ENCODE measurements at regions of chr4 and their contacts with region 1.

Region 1: DNA sequence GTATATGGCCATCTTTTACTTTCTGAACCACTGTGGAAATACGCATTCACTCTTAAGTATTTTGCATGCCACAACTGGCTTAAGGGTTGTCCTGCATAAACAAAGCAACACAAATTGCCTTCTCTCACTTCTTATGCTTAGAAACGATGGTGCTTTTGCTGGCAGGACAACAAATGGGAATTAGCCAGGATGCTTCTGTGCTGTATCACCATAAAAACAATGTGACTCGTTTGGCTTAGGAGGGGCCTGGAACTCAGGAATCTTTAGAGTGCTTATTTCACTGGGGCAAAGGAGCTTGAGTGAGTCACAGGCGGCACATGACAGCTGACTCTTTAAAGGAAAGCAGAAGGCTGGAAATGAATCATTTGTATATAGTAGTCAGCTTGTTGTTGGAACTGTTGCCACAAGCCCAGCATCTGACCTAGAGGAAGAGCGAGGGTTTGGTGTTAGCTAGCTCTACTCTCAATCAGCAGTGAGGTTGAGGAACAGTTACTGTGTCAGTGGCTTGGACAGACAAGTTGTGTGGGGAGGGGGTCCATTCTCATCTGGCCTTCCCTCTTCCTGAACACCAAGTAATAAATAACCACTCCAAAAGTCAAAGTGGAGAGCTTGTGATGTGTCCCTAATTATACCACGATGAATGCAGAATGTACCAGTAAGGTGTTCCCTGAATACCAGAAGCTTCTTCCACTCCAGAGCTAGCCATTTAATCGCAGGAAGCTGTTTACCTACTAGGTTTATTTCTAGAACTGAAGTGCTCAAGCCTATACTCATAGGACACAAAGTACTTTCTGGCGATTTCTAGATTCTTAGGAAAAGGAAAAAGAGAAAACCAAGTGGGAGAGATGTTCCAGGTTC is 293.1 kb downstream of the CAMK2D start:
- DNase-seq: peak; percentile 100
- H3K4me3 ChIP-seq: peak overlapping the region in 1 of 3 experiments; percentile 7
- H3K27ac ChIP-seq: peak overlapping the region; percentile 96
- H3K4me1 ChIP-seq: peaks cover 31% of the 10 kb centered on the region
- H3K27me3 ChIP-seq: no peaks in the 10 kb centered on the region
- CTCF ChIP-seq: no peak
- POLR2A ChIP-seq: peak; percentile 40

Region 2: DNA sequence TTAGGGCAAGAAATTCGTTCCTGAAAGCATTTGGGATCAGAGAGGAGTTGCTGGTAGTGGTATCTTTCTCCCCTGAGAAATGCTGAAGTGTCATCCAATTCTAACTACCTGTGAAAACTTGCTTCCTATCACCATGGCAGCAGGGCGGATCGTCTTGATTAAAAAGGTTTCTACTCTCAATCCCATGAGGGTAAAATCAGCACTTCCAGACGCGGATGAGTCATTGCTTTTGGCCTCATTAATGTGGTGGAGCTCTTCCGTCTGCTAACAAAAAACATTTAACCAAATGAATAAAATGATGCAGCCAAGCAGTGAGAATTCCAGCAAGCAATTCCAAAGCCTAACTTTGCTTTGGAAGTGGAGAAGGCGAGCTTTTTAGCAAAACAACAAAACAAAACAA is 32.5 kb before region 1 on chr4:
- CTCF ChIA-PET with region 1: interaction called, 3 read pairs
- POLR2A ChIA-PET with region 1: no interaction called
- dilution Hi-C with region 1: no loop called
- intact Hi-C with region 1: loop called (anchors 1 kb)
- DNase-seq: peak; percentile 94
- H3K4me3 ChIP-seq: peak overlapping the region in 1 of 3 experiments; percentile 44
- H3K27ac ChIP-seq: peak overlapping the region; percentile 78
- H3K4me1 ChIP-seq: peaks cover 22% of the 10 kb centered on the region
- H3K27me3 ChIP-seq: no peaks in the 10 kb centered on the region
- CTCF ChIP-seq: no peak
- POLR2A ChIP-seq: no peak

Region 3: GRCh38 chr4:113452868-113453620 is 15.3 kb before region 1 on chr4:
- CTCF ChIA-PET with region 1: interaction called, 8 read pairs
- POLR2A ChIA-PET with region 1: interaction called, 6 read pairs
- dilution Hi-C with region 1: no loop called
- intact Hi-C with region 1: loop called (anchors 1 kb)
- DNase-seq: peak; percentile 95
- H3K4me3 ChIP-seq: peak overlapping the region in 1 of 3 experiments; percentile 29
- H3K27ac ChIP-seq: peak overlapping the region; percentile 78
- H3K4me1 ChIP-seq: peaks cover 17% of the 10 kb centered on the region
- H3K27me3 ChIP-seq: no peaks in the 10 kb centered on the region
- CTCF ChIP-seq: no peak
- POLR2A ChIP-seq: peak; percentile 25

Region 4: DNA sequence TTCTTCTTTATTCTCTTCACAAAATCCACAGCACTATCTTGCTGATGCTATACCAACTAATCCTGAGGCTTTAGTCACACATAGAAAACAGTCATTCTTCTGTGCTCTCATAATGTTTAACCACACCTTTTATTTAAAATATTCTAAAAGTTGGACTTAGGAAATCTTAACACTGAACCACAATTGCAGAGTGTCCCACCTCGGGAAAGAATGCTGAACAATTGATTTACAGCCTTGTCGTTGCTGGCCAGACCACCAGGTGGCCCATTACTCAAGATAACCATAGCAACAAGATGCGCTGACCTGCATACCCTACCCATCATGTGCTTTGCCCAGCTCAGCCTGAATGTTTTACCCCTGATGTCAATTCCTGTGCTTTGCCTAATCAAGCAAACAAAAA is 410.3 kb after region 1 on chr4:
- CTCF ChIA-PET with region 1: no interaction called
- POLR2A ChIA-PET with region 1: no interaction called
- dilution Hi-C with region 1: no loop called
- intact Hi-C with region 1: loop called (anchors 2 kb)
- DNase-seq: peak; percentile 40
- H3K4me3 ChIP-seq: no peak overlapping the region
- H3K27ac ChIP-seq: no peak overlapping the region
- H3K4me1 ChIP-seq: peaks cover 16% of the 10 kb centered on the region
- H3K27me3 ChIP-seq: no peaks in the 10 kb centered on the region
- CTCF ChIP-seq: peak; percentile 25 to 30
- POLR2A ChIP-seq: no peak

Region 5: GRCh38 chr4:114077610-114078009 is 609.2 kb after region 1 on chr4:
- CTCF ChIA-PET with region 1: no interaction called
- POLR2A ChIA-PET with region 1: no interaction called
- dilution Hi-C with region 1: no loop called
- intact Hi-C with region 1: loop called (anchors 10 kb)
- DNase-seq: peak; percentile 92
- H3K4me3 ChIP-seq: no peak overlapping the region
- H3K27ac ChIP-seq: peak overlapping the region; percentile 58
- H3K4me1 ChIP-seq: peaks cover 13% of the 10 kb centered on the region
- H3K27me3 ChIP-seq: no peaks in the 10 kb centered on the region
- CTCF ChIP-seq: no peak
- POLR2A ChIP-seq: no peak

Measured in endothelial cell of umbilical vein (primary cell).